A673 (cell line): ENCODE measurements at regions of chr1 and their contacts with region 1.

Region 1: DNA sequence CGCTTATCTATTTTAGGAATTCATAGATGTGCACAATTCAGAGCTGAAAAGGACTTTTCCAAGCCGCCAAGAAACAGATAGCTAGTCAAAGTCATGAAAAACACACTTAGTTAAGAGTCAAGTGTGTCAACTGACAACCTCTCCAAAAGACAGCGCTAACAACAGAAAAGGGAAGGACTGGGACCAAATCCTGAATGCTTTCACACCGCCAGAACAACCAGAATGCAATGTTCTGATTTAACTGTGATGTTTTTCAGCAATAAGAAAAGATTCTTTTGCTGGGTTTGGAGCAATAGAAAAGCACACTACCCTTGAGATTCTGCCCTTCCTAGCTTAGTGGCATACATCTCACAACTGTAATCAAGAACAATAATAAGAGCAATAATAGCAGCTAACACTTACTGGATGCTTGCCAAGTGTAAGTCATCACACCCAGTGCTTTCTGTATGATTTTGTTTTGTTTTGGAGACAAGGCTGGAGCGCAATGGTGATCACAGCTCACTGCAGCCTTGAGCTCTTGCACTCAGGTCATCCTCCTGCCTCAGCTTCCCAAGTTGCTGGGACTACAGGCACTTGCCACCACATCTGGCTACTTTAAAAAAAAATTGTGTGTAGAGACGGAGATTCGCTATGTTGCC is 33.9 kb upstream of the SDC3 start:
- DNase-seq: no peak
- H3K4me3 ChIP-seq: no peak overlapping the region
- H3K27ac ChIP-seq: no peak overlapping the region
- H3K4me1 ChIP-seq: no peaks in the 10 kb centered on the region
- H3K27me3 ChIP-seq: no peaks in the 10 kb centered on the region
- CTCF ChIP-seq: no peak

Region 2: GRCh38 chr1:30253807-30254440 is 688.5 kb before region 1 on chr1:
- CTCF ChIA-PET with region 1: no interaction called
- POLR2A ChIA-PET with region 1: no interaction called
- intact Hi-C with region 1: no loop called
- DNase-seq: peak; percentile 73
- H3K4me3 ChIP-seq: no peak overlapping the region
- H3K27ac ChIP-seq: peak overlapping the region; percentile 100
- H3K4me1 ChIP-seq: peaks cover 94% of the 10 kb centered on the region
- H3K27me3 ChIP-seq: no peaks in the 10 kb centered on the region
- CTCF ChIP-seq: no peak

Region 3: GRCh38 chr1:31901838-31902509 is 959.5 kb after region 1 on chr1:
- CTCF ChIA-PET with region 1: interaction called, 13 read pairs
- POLR2A ChIA-PET with region 1: no interaction called
- intact Hi-C with region 1: no loop called
- DNase-seq: no peak
- H3K4me3 ChIP-seq: no peak overlapping the region
- H3K27ac ChIP-seq: no peak overlapping the region
- H3K4me1 ChIP-seq: peaks cover 5% of the 10 kb centered on the region
- H3K27me3 ChIP-seq: no peaks in the 10 kb centered on the region
- CTCF ChIP-seq: no peak